Activated CD4-positive, alpha-beta T cell treated with anti-CD3 and anti-CD28 coated beads, Interleukin-2, amount 10 ng/mL, durations not matched to agents 24 days and 14 days (primary cell): ENCODE measurements at regions of chr1 and their contacts with region 1.

Region 1: DNA sequence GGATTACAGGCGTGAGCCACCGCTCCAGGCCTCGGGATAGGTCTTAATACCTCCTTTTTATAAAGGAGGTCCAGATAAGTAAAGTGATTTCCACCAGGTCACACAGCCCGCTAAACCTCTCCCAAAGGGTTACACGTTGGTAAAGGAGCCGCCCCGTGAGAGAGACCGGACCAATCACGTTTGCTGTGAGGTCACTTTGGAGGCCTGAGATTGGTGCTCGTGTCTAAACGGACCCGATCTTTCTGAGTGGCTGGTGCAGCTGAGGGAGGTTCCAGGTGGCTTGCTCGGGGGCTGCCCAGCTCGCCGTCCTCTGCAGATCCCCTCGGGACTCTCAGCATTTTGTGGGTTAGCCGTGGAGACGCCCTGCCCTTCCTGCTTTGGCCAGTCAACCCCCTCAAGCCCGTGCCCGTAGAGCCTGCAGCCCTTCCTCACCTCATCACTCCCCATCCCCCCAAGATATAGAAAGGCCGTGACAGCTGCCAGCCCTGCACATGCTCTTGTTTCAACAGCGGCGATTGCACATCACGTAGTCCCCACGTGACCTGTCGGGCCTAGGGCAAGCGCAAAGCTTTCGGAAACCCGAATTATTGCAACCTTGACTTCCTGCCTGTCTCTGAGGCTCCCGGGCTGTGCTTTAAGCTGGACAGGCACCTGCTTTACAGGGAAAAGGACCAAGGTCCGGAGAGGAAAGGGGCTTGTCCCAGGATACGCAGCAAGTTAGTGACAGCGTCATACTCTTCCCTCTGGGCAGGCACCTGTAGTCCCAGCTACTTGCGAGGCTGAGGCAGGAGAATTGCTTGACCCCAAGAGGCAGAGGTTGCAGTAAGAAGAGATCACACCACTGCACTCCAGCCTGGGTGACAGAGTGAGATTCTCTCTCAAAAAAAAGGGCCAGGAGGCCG is 5.0 kb upstream of the COA7 start:
- DNase-seq: peak; percentile 94
- H3K4me3 Mint-ChIP-seq: peak overlapping the region; percentile 86
- H3K27ac Mint-ChIP-seq: peak overlapping the region; percentile 89
- H3K4me1 Mint-ChIP-seq: peaks cover 15% of the 10 kb centered on the region
- H3K27me3 Mint-ChIP-seq: peaks cover 6% of the 10 kb centered on the region

Region 2: DNA sequence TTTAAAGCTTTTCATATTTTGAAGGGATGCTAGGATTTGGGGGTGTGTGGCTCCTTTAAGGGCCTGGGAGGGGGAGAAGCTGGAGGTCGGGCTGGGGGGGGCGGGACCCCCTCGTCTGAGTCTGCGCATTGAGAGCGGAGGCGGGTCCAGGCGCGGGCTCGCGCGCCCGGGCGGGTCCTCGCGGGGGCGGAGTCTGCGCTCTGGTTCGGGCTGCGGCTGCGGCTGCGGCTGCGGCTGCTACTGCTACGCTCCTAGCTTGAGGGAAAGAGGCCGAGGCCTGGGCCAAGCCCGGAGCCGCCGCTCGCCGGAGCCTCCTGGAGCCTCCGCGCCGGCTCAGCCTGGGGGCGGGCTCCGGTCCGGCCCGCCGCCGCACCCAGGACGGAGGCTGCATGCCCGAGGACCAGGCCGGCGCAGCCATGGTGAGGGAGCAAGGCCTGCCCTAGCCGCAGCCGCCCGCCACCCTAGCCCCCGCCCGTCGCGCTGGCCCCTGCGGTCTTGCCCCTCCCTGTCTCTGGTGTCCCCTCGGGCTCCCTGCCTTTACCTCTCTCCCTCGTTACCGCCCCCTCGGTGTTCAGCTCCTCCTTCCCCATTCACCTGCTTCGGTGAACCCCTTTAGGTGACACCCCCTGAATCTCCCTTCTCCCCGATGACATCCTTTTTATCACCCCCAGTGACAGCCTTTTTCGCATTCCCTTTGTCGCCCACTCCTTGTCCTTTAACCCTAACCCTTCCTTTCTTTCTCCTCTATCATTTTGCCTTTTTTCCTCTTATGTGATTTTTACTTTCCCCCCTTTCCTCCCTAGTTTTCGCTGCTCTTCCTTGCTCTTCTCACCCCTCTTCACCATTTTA is 23.4 kb after region 1 on chr1 and contains the start of gene ZYG11B:
- intact Hi-C with region 1: loop called (anchors 1 kb)
- DNase-seq: peak; percentile 97
- H3K4me3 Mint-ChIP-seq: peak within 1 kb of the TSS; percentile 91
- H3K27ac Mint-ChIP-seq: peak within 1 kb of the TSS; percentile 80
- H3K4me1 Mint-ChIP-seq: peaks cover 30% of the 10 kb centered on the region
- H3K27me3 Mint-ChIP-seq: peaks cover 2% of the 10 kb centered on the region
- total RNA-seq, gene ZYG11B: 9.3 and 10.2 TPM in 2 replicates

Region 3: GRCh38 chr1:52748119-52748518 is 45.0 kb after region 1 on chr1:
- intact Hi-C with region 1: loop called (anchors 5 kb)
- DNase-seq: no peak
- H3K4me3 Mint-ChIP-seq: no peak overlapping the region
- H3K27ac Mint-ChIP-seq: no peak overlapping the region
- H3K4me1 Mint-ChIP-seq: peaks cover 3% of the 10 kb centered on the region
- H3K27me3 Mint-ChIP-seq: no peaks in the 10 kb centered on the region

Region 4: DNA sequence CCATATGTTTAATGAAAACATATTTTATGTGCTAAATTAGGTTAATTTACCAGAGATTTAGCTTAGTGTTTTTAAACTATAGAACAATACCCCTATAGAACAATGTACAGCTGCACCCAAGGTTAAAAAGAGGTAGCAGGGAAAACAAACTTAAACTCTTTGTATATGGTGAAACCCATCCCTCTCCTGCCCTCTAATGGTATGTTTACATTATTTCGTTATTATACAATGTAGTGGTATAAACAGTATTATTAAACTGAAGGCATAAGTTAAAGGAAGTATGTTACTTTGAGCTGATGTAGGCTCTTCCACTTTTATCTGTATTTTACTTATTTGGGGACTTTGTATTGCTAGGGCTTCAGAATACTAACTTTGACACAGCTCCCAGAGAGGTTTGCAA is 122.7 kb after region 1 on chr1:
- intact Hi-C with region 1: loop called (anchors 5 kb)
- DNase-seq: no peak
- H3K4me3 Mint-ChIP-seq: no peak overlapping the region
- H3K27ac Mint-ChIP-seq: no peak overlapping the region
- H3K4me1 Mint-ChIP-seq: no peaks in the 10 kb centered on the region
- H3K27me3 Mint-ChIP-seq: no peaks in the 10 kb centered on the region

Region 5: DNA sequence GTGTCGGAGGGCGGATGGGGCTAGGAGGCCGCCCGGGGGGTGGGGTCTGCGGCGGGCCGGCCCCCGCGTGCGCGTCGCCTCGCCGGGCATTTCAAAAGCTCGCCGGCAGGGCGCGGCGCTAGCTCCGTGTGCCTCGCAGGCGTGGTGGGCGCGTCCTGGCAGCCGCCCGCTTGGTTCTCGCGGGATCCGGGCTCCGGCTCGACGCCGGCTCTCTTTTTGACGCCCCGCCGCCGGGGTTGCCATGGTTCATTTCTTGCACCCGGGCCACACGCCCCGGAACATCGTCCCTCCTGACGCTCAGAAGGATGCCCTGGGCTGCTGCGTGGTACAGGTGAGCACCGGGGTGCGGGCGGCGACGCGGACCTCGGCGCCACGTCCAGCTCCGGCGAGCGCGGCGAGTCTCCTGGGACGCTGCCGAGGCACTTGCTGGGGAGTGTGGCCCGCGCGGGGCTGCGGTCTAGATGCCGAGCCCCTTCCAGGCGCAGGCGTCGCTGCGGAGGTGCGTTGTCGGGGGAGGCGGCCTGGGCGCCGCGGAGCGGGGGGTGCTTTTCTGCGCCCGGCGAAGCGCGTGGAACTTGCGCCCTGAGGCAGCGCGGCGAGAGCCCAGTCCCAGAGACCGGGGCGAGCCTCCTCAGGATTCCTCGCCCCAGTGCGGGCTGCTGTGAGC is 139.6 kb after region 1 on chr1 and contains the start of gene ZYG11A:
- intact Hi-C with region 1: loop called (anchors 5 kb)
- DNase-seq: peak; percentile 94
- H3K4me3 Mint-ChIP-seq: peak within 1 kb of the TSS; percentile 76
- H3K27ac Mint-ChIP-seq: peak within 1 kb of the TSS; percentile 34
- H3K4me1 Mint-ChIP-seq: peaks cover 8% of the 10 kb centered on the region
- H3K27me3 Mint-ChIP-seq: peaks cover 27% of the 10 kb centered on the region
- total RNA-seq, gene ZYG11A: 0.12 and 0.17 TPM in 2 replicates

Region 6: DNA sequence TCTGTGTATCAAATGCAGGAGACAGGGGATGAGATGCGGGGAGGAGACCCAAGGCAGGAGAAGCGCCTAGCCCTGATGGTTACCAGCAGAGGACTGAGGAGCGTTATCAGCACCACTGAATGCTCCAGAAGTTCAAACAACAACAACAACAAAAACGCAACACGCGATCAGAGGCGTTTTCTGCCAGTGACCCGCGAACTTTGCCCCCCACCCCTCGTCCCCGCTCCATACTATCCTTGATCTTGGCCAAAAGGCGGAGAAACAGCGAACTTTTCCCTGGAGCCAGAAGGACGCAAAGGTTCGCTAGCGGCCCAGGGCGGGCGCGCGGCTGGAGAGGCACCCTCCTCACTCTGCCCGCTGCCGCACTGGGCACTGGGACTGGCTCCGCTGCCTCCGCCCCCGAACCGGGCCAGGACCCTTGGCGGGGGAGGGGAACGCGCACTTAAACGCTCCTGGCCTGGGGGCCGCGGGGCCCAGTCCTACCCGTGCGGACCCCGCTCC is 217.7 kb after region 1 on chr1:
- intact Hi-C with region 1: loop called (anchors 5 kb)
- DNase-seq: no peak
- H3K4me3 Mint-ChIP-seq: peak overlapping the region; percentile 86
- H3K27ac Mint-ChIP-seq: peak overlapping the region; percentile 37
- H3K4me1 Mint-ChIP-seq: peaks cover 20% of the 10 kb centered on the region
- H3K27me3 Mint-ChIP-seq: peaks cover 4% of the 10 kb centered on the region

Region 7: GRCh38 chr1:53188099-53188498 is 485.0 kb after region 1 on chr1:
- intact Hi-C with region 1: loop called (anchors 5 kb)
- DNase-seq: no peak
- H3K4me3 Mint-ChIP-seq: no peak overlapping the region
- H3K27ac Mint-ChIP-seq: no peak overlapping the region
- H3K4me1 Mint-ChIP-seq: no peaks in the 10 kb centered on the region
- H3K27me3 Mint-ChIP-seq: peaks cover 16% of the 10 kb centered on the region